Right cardiac atrium (tissue), 5 donors: ENCODE measurements at regions of chr5 and their contacts with region 1.

Region 1: DNA sequence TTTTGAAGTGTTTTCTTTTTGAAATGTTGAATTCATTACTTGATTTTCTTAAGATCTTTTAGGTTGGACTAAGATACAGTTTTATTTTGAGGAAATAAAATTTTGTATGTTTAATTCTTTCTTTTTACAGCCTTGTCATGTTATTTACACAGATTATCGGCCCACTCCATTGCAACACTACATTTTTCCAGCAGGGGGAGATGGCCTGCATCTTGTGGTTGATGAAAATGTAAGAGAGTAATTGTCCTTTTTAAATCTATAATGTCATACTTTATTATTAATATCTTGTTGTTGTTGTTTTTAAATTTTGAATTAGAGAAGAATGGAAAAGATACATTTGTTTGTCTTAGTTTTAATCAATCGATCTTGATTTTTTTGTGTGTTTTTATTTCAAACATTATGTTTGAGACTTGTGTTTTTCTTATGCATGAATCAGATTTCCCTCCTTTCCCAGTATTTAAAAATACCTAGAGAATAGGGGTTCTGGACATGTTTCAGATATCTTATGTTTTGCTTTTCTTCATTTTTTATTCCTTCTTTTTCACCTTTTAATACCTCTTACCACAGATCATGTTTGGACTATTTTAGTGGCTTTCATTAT is 36.7 kb downstream of the MTREX start:
- DNase-seq: peak; percentile 26 to 76 (median 62)
- ATAC-seq: no peak
- H3K4me3 ChIP-seq: no peak overlapping the region
- H3K27ac ChIP-seq: no peak overlapping the region
- H3K4me1 ChIP-seq: no peaks in the 10 kb centered on the region
- H3K27me3 ChIP-seq: no peaks in the 10 kb centered on the region

Region 2: DNA sequence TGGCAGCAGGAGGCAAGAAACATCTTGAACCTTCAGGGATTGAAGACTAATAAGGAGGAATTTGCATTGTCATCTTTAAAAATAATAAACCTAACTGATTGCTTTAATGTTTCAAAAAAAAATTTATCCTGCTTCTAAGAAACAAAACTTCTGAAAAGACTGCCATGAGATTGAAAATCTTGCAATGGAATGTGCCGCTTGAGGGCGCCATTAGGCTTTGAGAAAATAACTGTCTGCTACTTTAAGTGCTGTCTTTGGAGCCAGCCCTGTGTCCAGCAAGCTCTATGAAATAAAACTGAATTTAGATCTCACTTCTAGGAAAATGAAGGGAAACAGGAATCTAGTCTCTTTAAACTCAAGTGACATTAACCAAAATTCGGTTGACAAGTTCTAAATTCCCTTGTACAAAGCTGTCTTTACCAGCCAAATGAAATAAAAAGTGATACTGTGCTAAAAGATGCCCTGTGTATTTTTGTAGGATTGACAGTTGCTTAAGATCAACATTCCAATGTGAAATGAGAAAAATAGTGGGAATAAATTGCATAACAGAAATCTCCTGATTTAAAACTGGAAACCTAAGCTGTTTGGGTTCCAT is 438.5 kb before region 1 on chr5:
- intact Hi-C with region 1: no loop called
- DNase-seq: peak; percentile 64 to 87 (median 66)
- ATAC-seq: no peak
- H3K4me3 ChIP-seq: no peak overlapping the region
- H3K27ac ChIP-seq: no peak overlapping the region
- H3K4me1 ChIP-seq: no peaks in the 10 kb centered on the region
- H3K27me3 ChIP-seq: no peaks in the 10 kb centered on the region

Region 3: GRCh38 chr5:55021410-55021809 is 323.1 kb before region 1 on chr5:
- intact Hi-C with region 1: no loop called
- DNase-seq: no peak
- ATAC-seq: peak in 1 of 2 donors; percentile 39
- H3K4me3 ChIP-seq: no peak overlapping the region
- H3K27ac ChIP-seq: no peak overlapping the region
- H3K4me1 ChIP-seq: no peaks in the 10 kb centered on the region
- H3K27me3 ChIP-seq: no peaks in the 10 kb centered on the region

Region 4: DNA sequence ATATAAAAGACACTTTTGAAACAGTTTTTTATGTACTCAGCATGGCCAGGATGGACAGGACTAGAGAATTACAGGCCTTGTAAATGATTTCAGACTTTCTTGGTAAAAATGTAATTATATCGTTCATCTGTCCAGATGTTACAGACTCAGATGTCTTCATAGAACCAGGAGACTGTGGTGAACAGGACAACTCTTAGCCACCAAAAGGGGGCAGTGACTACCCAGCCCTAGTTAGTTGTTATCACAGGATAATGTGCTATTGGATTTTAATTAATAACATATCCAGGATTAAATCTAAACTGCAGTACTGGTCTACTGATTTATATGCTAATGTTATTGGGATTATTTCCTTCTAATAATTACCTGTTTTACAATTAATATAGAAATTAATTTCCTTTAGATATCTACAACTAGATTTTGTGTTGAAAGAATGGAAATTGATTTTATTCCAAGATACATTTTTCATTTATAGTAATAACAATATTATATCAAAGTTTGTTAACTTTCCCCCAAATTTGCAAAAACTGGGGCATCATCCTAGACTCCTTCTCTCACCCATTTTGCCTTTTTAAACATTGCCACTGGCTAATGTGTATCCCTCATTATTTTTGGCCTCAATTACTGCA is 62.7 kb after region 1 on chr5:
- intact Hi-C with region 1: loop called in 1 of 4 experiments (anchors 10 kb)
- DNase-seq: no peak
- ATAC-seq: peak; percentile 80 to 82
- H3K4me3 ChIP-seq: no peak overlapping the region
- H3K27ac ChIP-seq: no peak overlapping the region
- H3K4me1 ChIP-seq: peaks cover 2% of the 10 kb centered on the region
- H3K27me3 ChIP-seq: no peaks in the 10 kb centered on the region

Region 5: DNA sequence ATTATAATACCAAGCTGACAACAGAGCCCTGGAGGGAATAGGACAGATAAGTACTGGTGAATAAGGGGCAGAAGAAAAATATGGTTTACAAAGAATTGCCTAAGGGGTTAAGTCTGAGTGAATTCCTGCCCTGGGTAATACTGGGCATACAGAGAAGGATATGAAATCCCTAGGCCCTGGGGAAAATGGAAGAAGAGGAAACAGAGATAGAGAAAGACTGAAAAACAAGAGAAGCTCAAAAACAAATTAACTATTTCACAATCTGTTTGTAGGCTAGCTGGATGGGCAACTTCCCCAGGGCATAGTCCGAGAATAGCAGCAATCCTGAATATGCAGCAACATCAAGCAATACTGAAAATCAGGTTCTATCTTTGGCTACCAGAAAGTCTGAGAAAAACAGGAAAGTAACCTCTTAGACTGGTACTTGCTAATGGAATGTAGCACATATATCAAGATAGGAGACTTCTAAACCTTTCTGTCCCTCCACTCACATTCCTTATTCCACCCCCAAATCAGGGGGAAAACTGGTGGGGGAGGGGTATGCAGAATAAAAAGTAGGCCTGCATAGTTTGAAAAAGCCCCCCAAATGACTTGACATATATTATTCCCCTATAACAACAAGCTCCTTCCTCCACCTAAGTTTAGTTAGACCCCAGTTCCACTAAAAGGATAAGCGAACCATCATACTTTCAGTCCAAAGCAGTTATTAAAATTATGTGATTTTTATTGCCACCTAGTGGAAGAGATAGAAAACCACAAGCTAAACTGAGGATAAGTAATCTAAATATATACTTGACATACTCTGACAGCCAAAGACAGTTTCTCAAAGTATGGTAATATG is 347.0 kb after region 1 on chr5:
- intact Hi-C with region 1: loop called in 3 of 4 experiments (anchors 5 to 10 kb)
- DNase-seq: no peak
- ATAC-seq: peak; percentile 70 to 81
- H3K4me3 ChIP-seq: peak overlapping the region; percentile 45
- H3K27ac ChIP-seq: no peak overlapping the region
- H3K4me1 ChIP-seq: peaks cover 2% of the 10 kb centered on the region
- H3K27me3 ChIP-seq: no peaks in the 10 kb centered on the region

Region 6: GRCh38 chr5:55708732-55709131 is 364.2 kb after region 1 on chr5:
- intact Hi-C with region 1: loop called in 1 of 4 experiments (anchors 10 kb)
- DNase-seq: no peak
- ATAC-seq: no peak
- H3K4me3 ChIP-seq: no peak overlapping the region
- H3K27ac ChIP-seq: no peak overlapping the region
- H3K4me1 ChIP-seq: peaks cover 3% of the 10 kb centered on the region
- H3K27me3 ChIP-seq: no peaks in the 10 kb centered on the region